Activated CD8-positive, alpha-beta T cell treated with anti-CD3 and anti-CD28 coated beads for 36 hours (primary cell): ENCODE measurements at regions of chr1 and their contacts with region 1.

Region 1: GRCh38 chr1:23354245-23354644 is 10.2 kb upstream of the HNRNPR start:
- DNase-seq: peak; percentile 55
- ATAC-seq: peak; percentile 66
- H3K4me3 Mint-ChIP-seq: no peak overlapping the region
- H3K27ac Mint-ChIP-seq: no peak overlapping the region
- H3K4me1 Mint-ChIP-seq: peaks cover 5% of the 10 kb centered on the region
- H3K27me3 Mint-ChIP-seq: no peaks in the 10 kb centered on the region
- CTCF ChIP-seq: no peak

Region 2: GRCh38 chr1:23216771-23217420 is 137.3 kb before region 1 on chr1:
- CTCF ChIA-PET with region 1: no interaction called
- POLR2A ChIA-PET with region 1: no interaction called
- intact Hi-C with region 1: no loop called
- DNase-seq: peak; percentile 49
- ATAC-seq: peak; percentile 88
- H3K4me3 Mint-ChIP-seq: no peak overlapping the region
- H3K27ac Mint-ChIP-seq: no peak overlapping the region
- H3K4me1 Mint-ChIP-seq: peaks cover 6% of the 10 kb centered on the region
- H3K27me3 Mint-ChIP-seq: peaks cover 57% of the 10 kb centered on the region
- CTCF ChIP-seq: peak; percentile 96

Region 3: DNA sequence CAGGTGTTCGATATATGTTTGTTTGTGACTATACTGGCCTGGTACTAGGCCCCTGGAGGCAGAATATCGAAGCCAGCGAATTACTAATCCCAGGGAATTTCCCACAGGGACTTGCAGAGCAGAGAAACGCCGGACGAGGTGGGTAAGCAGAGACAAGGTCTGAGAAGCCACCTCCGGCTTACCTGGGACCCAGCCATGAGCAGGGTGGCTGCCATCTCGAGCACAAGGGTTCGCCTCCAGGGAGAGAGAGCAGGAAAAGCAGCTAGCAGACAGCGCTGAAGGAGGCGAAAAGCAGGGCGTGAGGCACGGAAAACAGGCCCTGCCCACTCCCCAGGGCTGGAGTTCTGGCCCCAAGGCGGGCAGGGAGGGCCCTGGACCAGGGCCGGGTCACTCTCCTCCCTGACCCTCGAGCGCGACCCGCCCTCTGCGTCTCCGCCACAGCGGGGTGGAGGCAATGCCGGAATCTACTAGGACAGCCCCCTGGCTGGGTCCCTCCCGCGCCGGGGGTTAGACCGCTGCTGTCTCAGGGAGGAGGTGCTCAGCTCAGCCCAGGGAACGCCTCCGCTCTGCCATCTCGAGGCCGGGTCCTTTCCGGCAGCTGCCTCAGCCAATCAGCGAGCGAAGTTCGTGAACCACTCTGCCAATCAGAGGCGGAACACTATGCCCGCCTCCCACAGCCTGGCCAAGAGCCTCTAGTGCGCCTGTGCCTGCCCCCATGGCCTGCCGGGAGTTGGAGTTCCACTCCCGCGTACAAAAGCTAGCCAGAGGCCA is 13.7 kb after region 1 on chr1:
- CTCF ChIA-PET with region 1: interaction called, 13 read pairs
- POLR2A ChIA-PET with region 1: interaction called, 4 read pairs
- intact Hi-C with region 1: no loop called
- DNase-seq: peak; percentile 99
- ATAC-seq: peak; percentile 94
- H3K4me3 Mint-ChIP-seq: peak overlapping the region; percentile 95
- H3K27ac Mint-ChIP-seq: peak overlapping the region; percentile 98
- H3K4me1 Mint-ChIP-seq: peaks cover 26% of the 10 kb centered on the region
- H3K27me3 Mint-ChIP-seq: no peaks in the 10 kb centered on the region
- CTCF ChIP-seq: no peak

Region 4: DNA sequence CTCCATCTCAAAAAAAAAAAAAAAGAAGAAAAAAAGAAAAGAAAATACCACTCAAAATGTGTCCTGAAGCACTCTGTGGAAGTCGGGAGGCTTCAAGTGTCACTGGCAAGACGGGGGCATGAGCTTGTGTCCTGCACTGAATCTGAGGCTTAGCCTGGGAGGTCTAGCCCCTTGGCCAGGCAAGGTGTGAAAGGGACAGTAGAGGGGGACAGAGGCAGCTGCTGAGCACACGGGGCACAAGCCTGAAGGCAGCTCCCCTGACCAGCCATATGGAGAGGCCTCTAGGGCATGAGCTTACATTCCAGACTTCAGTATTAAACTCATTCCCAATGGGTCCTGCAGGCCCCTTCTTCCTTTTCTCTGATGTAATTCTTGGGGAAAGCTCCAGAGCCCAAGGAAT is 153.3 kb after region 1 on chr1:
- CTCF ChIA-PET with region 1: no interaction called
- POLR2A ChIA-PET with region 1: no interaction called
- intact Hi-C with region 1: no loop called
- DNase-seq: no peak
- ATAC-seq: no peak
- H3K4me3 Mint-ChIP-seq: no peak overlapping the region
- H3K27ac Mint-ChIP-seq: no peak overlapping the region
- H3K4me1 Mint-ChIP-seq: no peaks in the 10 kb centered on the region
- H3K27me3 Mint-ChIP-seq: no peaks in the 10 kb centered on the region
- CTCF ChIP-seq: no peak